Activated naive CD4-positive, alpha-beta T cell treated with anti-CD3 and anti-CD28 coated beads for 36 hours (primary cell): ENCODE measurements at regions of chr15 and their contacts with region 1.

Region 1: GRCh38 chr15:41230650-41231533 is at the starts of genes CHP1 and EXD1:
- DNase-seq: peak; percentile 98
- H3K4me3 Mint-ChIP-seq: peak within 1 kb of the TSS; percentile 88
- H3K27ac Mint-ChIP-seq: peak within 1 kb of the TSS; percentile 87
- H3K4me1 Mint-ChIP-seq: peaks cover 22% of the 10 kb centered on the region
- H3K27me3 Mint-ChIP-seq: no peaks in the 10 kb centered on the region
- total RNA-seq, gene CHP1: 37.7 to 39.8 TPM
- total RNA-seq, gene EXD1: not detected

Region 2: DNA sequence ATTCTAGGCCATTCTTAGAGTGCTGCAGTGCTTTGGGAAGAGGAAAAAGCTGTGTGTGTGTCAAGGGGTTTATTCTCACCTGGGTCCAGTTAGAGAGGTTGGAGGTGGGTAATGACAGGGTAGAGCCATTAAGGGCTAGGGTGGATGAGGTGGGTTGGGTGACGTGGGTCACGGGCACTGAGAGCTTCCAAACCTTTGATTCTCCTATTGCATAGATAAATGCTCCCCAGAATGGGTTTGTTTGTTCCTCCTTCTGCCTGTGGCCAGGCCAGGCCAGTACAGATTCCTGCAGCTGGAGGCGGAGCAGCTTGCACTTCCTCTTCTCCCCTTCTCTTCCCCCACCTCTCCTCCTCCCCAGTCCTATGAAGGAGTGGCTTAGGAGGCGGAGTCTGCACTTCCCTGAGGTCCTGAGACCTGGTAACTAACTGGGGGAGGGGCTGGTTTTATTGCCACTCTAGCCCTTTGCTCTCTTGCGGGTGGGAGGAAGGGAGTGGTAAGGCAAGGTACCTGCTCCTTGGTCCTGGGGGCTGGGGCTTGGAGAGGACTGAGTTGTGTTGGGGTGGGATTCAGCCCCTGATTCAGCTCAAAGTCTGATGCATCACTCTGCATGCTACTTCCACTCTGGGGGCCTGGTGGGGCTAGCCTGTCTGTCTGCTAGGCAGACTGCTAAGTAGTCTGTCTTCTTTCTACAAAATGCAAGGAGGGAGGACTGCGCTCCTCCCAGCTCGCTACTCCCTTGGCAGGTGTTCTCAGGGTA is 383.5 kb before region 1 on chr15:
- CTCF ChIA-PET with region 1: no interaction called
- intact Hi-C with region 1: loop called (anchors 1 kb)
- DNase-seq: no peak
- H3K4me3 Mint-ChIP-seq: no peak overlapping the region
- H3K27ac Mint-ChIP-seq: no peak overlapping the region
- H3K4me1 Mint-ChIP-seq: peaks cover 21% of the 10 kb centered on the region
- H3K27me3 Mint-ChIP-seq: peaks cover 8% of the 10 kb centered on the region

Region 3: DNA sequence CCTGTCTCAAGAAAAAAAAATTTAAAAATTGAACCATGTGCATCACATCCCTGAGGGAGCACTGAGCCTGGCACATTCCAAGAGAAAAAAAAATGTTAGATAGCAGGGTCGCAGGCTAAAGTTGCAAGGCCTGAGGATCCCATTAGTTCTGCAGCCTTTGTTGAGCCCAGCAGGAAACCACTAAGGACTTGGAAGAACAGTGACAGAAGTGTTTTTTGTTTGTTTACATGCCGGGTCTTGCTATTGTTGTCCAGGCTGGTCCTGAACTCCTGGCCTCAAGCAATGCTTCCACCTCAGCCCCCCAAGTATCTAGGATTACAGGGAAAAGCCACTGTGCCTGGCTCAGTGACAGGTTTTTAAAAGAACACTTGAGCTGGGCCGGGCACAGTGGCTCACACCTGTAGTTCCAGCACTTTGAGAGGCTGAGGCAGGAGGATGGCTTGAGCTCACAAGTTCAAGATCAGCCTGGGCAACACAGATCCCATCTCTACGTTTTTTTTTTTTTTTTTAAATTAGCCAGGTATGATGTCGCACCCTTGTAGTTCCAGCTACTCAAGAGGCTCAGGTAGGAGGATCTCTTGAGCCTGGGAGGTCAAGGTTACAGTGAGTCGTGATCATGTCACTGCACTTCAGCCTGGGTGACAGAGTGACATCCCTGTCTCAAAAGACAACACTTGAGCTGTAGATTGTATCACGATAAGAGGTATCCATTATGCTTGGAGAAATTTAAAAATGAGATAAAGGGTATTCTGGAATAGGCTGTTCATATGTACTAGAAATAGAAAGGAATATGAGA is 262.4 kb before region 1 on chr15:
- CTCF ChIA-PET with region 1: no interaction called
- intact Hi-C with region 1: no loop called
- DNase-seq: no peak
- H3K4me3 Mint-ChIP-seq: no peak overlapping the region
- H3K27ac Mint-ChIP-seq: no peak overlapping the region
- H3K4me1 Mint-ChIP-seq: no peaks in the 10 kb centered on the region
- H3K27me3 Mint-ChIP-seq: no peaks in the 10 kb centered on the region

Region 4: GRCh38 chr15:41116116-41116871 is 114.6 kb before region 1 on chr15 and contains the start of gene INO80:
- CTCF ChIA-PET with region 1: interaction called, 3 read pairs
- intact Hi-C with region 1: loop called (anchors 1 kb)
- DNase-seq: peak; percentile 99
- H3K4me3 Mint-ChIP-seq: peak within 1 kb of the TSS; percentile 88
- H3K27ac Mint-ChIP-seq: peak within 1 kb of the TSS; percentile 96
- H3K4me1 Mint-ChIP-seq: peaks cover 21% of the 10 kb centered on the region
- H3K27me3 Mint-ChIP-seq: no peaks in the 10 kb centered on the region
- total RNA-seq, gene INO80: 14.0 to 16.8 TPM

Region 5: DNA sequence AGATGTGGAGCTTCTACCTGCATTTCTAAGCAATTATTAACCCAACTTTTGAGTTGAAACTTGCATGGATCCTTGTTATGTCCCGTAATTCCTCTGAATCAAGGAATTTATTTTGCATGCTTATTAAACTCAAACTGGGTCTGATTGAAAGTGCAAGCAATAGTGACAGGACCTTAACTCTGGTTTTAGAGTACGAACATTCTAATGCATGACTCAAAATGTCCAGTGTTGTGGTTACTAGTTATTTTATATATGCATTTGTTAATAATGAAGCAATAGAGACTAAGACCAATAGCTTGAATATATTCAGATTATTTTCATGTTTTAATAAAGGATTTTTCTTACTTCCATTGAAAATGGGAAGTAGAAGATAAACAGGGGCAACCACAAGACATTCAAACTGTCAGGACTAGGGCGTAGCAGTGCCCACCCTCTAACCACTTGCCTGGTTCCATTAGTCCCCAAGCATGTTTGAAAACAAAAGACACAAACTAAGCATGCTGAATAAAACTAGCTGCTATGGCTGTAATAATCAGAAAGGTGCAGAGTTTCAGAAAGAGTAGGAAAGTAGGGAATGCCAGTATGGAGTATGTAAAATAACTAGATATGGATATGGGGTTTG is 73.4 kb after region 1 on chr15:
- CTCF ChIA-PET with region 1: no interaction called
- intact Hi-C with region 1: no loop called
- DNase-seq: no peak
- H3K4me3 Mint-ChIP-seq: no peak overlapping the region
- H3K27ac Mint-ChIP-seq: no peak overlapping the region
- H3K4me1 Mint-ChIP-seq: peaks cover 11% of the 10 kb centered on the region
- H3K27me3 Mint-ChIP-seq: no peaks in the 10 kb centered on the region

Region 6: GRCh38 chr15:41331833-41332787 is 101.2 kb after region 1 on chr15 and contains the start of gene OIP5:
- CTCF ChIA-PET with region 1: interaction called, 6 read pairs
- intact Hi-C with region 1: loop called (anchors 1 kb)
- DNase-seq: peak; percentile 100
- H3K4me3 Mint-ChIP-seq: peak within 1 kb of the TSS; percentile 100
- H3K27ac Mint-ChIP-seq: peak within 1 kb of the TSS; percentile 98
- H3K4me1 Mint-ChIP-seq: peaks cover 26% of the 10 kb centered on the region
- H3K27me3 Mint-ChIP-seq: no peaks in the 10 kb centered on the region
- total RNA-seq, gene OIP5: 9.5 to 10.7 TPM

Region 7: DNA sequence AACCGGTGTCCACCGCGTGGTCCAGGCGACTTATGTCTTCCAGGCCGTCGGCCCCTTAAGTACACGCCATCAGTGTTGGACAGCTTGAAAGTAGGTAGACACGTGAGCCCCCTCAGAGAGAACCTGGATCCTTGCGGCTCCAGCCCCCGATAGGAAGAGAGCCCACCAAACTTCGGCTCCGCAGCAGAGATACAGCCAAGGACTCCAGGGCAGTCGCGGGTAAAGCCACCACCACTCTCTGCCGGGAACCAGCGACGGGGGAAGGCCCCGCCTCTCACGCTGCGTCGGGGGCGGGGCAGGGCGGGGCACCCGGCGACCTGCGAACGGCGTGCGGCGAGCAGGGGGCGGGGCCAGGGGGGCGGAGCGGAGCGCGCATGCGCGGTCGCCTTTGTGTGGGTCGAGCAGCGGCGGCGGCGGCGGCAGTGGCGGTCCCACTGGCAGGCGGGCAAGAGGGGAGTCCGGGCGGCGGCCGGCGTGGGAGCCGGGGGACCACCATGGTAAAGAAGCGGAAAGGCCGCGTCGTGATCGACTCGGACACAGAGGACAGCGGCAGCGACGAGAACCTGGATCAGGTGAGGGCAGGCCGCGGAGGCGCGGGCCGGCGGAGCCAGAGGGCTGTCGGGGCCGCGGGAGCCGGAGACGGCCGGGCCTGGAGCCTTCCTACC is 186.0 kb after region 1 on chr15 and contains the start of gene RTF1:
- CTCF ChIA-PET with region 1: no interaction called
- intact Hi-C with region 1: loop called (anchors 2 kb)
- DNase-seq: peak; percentile 95
- H3K4me3 Mint-ChIP-seq: peak within 1 kb of the TSS; percentile 87
- H3K27ac Mint-ChIP-seq: peak within 1 kb of the TSS; percentile 89
- H3K4me1 Mint-ChIP-seq: peaks cover 43% of the 10 kb centered on the region
- H3K27me3 Mint-ChIP-seq: no peaks in the 10 kb centered on the region
- total RNA-seq, gene RTF1: 18.7 to 19.5 TPM